Caco-2 (cell line): ENCODE measurements at regions of chr3 and their contacts with region 1.

Region 1: GRCh38 chr3:124559881-124560574 is 170.2 kb upstream of the UMPS start:
- DNase-seq: peak; percentile 72 to 77
- H3K4me3 ChIP-seq: no peak overlapping the region
- H3K4me3 Mint-ChIP-seq: no peak overlapping the region
- H3K27ac Mint-ChIP-seq: no peak overlapping the region
- H3K4me1 ChIP-seq: peaks cover 15% of the 10 kb centered on the region; the same call in 1 of the 2 replicates
- H3K4me1 Mint-ChIP-seq: peaks cover 18% of the 10 kb centered on the region
- H3K27me3 ChIP-seq: no peaks in the 10 kb centered on the region
- H3K27me3 Mint-ChIP-seq: peaks cover 5% of the 10 kb centered on the region
- CTCF ChIP-seq: peak; percentile 79 to 89

Region 2: DNA sequence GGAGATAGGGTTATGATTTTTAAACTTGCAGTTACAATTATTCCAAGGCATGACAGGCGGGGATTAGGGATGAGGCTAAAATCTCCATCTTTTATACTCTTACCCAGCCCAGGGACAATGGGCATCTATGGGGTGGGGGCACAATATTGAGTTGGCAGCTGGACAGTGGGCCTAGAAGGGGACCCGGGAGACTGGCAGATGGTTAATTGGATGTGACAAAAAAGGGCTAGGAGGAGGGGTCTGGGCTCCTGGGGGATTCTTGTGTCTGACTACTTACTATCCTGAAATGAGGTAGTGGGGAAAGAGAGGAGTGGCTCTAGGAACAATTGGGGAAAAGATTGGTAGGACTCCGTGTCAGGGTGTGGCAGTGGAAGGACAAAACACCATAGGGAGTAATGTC is 515.1 kb before region 1 on chr3:
- CTCF ChIA-PET with region 1: no interaction called
- POLR2A ChIA-PET with region 1: no interaction called
- intact Hi-C with region 1: no loop called
- DNase-seq: no peak
- H3K4me3 ChIP-seq: no peak overlapping the region
- H3K4me3 Mint-ChIP-seq: no peak overlapping the region
- H3K27ac Mint-ChIP-seq: no peak overlapping the region
- H3K4me1 ChIP-seq: no peaks in the 10 kb centered on the region
- H3K4me1 Mint-ChIP-seq: no peaks in the 10 kb centered on the region
- H3K27me3 ChIP-seq: no peaks in the 10 kb centered on the region
- H3K27me3 Mint-ChIP-seq: peaks cover 13% of the 10 kb centered on the region
- CTCF ChIP-seq: no peak

Region 3: DNA sequence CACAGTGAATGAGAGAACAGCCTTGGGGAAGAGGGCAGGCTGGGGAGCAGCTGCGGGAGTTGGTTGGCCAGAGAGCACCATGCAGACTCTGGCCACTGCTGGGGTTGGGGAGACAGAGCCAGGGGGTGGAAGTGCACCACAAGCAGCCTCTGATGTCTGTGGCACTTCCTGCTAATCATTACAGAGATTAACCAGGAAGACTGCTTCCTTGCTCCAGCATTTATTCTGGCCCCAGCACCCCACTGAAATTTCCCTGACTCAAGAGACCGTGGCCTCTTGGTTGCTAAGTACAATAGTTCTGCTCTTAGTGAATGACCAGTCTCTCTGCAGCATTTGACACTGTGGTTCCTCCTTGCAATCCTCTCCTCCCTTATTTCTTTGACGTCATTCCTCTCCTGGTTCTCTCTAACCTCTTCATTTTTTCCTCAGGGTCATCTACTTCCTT is 301.9 kb before region 1 on chr3:
- CTCF ChIA-PET with region 1: no interaction called
- POLR2A ChIA-PET with region 1: no interaction called
- intact Hi-C with region 1: no loop called
- DNase-seq: no peak
- H3K4me3 ChIP-seq: no peak overlapping the region
- H3K4me3 Mint-ChIP-seq: no peak overlapping the region
- H3K27ac Mint-ChIP-seq: no peak overlapping the region
- H3K4me1 ChIP-seq: no peaks in the 10 kb centered on the region
- H3K4me1 Mint-ChIP-seq: peaks cover 11% of the 10 kb centered on the region
- H3K27me3 ChIP-seq: no peaks in the 10 kb centered on the region
- H3K27me3 Mint-ChIP-seq: peaks cover 16% of the 10 kb centered on the region
- CTCF ChIP-seq: no peak

Region 4: GRCh38 chr3:124492811-124493210 is 67.2 kb before region 1 on chr3:
- CTCF ChIA-PET with region 1: no interaction called
- POLR2A ChIA-PET with region 1: no interaction called
- intact Hi-C with region 1: loop called (anchors 2 kb)
- DNase-seq: peak; percentile 68
- H3K4me3 ChIP-seq: no peak overlapping the region
- H3K4me3 Mint-ChIP-seq: no peak overlapping the region
- H3K27ac Mint-ChIP-seq: no peak overlapping the region
- H3K4me1 ChIP-seq: no peaks in the 10 kb centered on the region
- H3K4me1 Mint-ChIP-seq: no peaks in the 10 kb centered on the region
- H3K27me3 ChIP-seq: no peaks in the 10 kb centered on the region
- H3K27me3 Mint-ChIP-seq: no peaks in the 10 kb centered on the region
- CTCF ChIP-seq: peak; percentile 60 to 72

Region 5: GRCh38 chr3:124639406-124640237 is 79.6 kb after region 1 on chr3:
- CTCF ChIA-PET with region 1: interaction called, 7 read pairs
- POLR2A ChIA-PET with region 1: no interaction called
- intact Hi-C with region 1: loop called (anchors 2 kb)
- DNase-seq: peak in 1 of 2 experiments; percentile 52
- H3K4me3 ChIP-seq: no peak overlapping the region
- H3K4me3 Mint-ChIP-seq: peak overlapping the region; percentile 37
- H3K27ac Mint-ChIP-seq: peak overlapping the region; percentile 70
- H3K4me1 ChIP-seq: peaks cover 74% of the 10 kb centered on the region
- H3K4me1 Mint-ChIP-seq: peaks cover 53% of the 10 kb centered on the region
- H3K27me3 ChIP-seq: no peaks in the 10 kb centered on the region
- H3K27me3 Mint-ChIP-seq: no peaks in the 10 kb centered on the region
- CTCF ChIP-seq: no peak

Region 6: DNA sequence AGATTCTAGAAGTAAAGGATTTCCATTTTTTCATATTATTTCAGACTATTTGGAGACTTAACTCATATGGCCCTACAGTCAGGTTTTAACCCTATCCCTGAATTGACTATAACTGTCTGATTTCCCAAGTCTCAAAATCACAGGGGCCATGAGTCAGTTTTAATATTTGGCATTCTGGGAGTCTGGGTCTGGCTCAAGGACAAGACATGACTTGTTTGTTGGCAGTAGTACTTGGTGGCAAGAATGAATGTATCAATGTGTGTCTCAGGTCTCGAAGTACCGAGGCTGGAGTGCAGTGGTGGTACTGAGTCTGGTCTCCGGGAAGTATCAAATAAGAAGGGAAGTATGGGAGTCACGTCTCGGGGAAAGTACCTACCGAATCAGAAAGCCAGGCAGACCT is 181.0 kb after region 1 on chr3:
- CTCF ChIA-PET with region 1: no interaction called
- POLR2A ChIA-PET with region 1: no interaction called
- intact Hi-C with region 1: loop called (anchors 10 kb)
- DNase-seq: no peak
- H3K4me3 ChIP-seq: no peak overlapping the region
- H3K4me3 Mint-ChIP-seq: no peak overlapping the region
- H3K27ac Mint-ChIP-seq: no peak overlapping the region
- H3K4me1 ChIP-seq: no peaks in the 10 kb centered on the region
- H3K4me1 Mint-ChIP-seq: no peaks in the 10 kb centered on the region
- H3K27me3 ChIP-seq: no peaks in the 10 kb centered on the region
- H3K27me3 Mint-ChIP-seq: no peaks in the 10 kb centered on the region
- CTCF ChIP-seq: no peak

Region 7: DNA sequence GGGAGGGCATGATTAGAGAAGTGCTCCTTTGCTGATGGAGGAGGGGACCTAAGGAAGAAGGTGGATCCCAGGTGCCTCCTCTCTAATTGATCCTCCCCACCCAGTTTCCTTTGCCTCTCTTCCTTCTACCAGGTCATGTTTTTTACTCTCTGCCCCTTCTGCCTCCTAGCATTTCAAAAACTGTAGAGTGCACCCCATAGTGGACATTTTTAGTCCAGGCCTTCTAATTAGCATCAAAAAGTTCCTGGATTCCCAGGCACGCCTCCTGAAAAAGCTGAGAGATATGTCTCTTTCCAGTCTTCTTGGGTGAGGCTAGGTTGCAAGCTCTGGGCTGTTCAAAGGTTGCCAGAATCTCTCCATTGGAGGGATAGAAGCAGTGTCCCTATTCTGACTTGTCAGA is 345.8 kb after region 1 on chr3:
- CTCF ChIA-PET with region 1: no interaction called
- POLR2A ChIA-PET with region 1: no interaction called
- intact Hi-C with region 1: loop called (anchors 2 kb)
- DNase-seq: no peak
- H3K4me3 ChIP-seq: no peak overlapping the region
- H3K4me3 Mint-ChIP-seq: no peak overlapping the region
- H3K27ac Mint-ChIP-seq: no peak overlapping the region
- H3K4me1 ChIP-seq: no peaks in the 10 kb centered on the region; the same call in 1 of the 2 replicates
- H3K4me1 Mint-ChIP-seq: no peaks in the 10 kb centered on the region
- H3K27me3 ChIP-seq: no peaks in the 10 kb centered on the region
- H3K27me3 Mint-ChIP-seq: no peaks in the 10 kb centered on the region
- CTCF ChIP-seq: peak in 1 of 2 experiments; percentile 25